ENCODE measurements at regions of chr2 and their contacts with region 1.

Region 1: DNA sequence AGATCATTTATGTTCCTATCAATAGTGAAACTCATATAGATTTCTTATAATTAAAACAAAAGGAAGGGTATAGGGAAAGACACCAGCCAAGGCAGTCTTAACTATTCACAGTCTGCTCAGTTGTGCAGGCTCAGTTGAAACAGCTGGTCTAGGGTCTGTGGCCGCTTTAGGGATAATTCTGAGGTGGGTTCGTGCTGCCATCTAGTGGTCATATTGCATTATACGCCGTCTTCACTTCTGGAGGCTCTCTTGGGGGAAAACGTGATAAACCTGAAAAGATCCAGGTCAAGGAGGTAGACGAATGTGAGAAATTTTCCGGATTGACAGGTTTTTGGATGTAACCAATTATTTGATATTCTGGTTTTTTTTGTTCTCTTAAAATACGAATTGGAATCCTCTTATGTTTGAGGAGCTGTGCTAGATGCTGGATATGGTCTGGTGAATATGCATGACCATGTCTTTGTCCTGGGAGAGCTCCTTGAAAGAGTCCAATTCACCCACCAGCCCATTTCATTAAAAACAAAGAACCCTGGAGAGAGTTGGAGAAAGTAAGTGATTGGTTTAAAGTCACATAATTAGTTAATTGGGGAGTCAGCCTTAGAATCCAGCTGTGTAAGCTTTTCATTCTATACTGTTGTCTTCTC is 492.4 kb downstream of the PLCL1 start:
- DNase-seq: no peak
- ATAC-seq: peak; percentile 79

Region 2: GRCh38 chr2:197405582-197405981 is 891.2 kb before region 1 on chr2:
- intact Hi-C with region 1: no loop called
- DNase-seq: no peak
- ATAC-seq: no peak

Region 3: DNA sequence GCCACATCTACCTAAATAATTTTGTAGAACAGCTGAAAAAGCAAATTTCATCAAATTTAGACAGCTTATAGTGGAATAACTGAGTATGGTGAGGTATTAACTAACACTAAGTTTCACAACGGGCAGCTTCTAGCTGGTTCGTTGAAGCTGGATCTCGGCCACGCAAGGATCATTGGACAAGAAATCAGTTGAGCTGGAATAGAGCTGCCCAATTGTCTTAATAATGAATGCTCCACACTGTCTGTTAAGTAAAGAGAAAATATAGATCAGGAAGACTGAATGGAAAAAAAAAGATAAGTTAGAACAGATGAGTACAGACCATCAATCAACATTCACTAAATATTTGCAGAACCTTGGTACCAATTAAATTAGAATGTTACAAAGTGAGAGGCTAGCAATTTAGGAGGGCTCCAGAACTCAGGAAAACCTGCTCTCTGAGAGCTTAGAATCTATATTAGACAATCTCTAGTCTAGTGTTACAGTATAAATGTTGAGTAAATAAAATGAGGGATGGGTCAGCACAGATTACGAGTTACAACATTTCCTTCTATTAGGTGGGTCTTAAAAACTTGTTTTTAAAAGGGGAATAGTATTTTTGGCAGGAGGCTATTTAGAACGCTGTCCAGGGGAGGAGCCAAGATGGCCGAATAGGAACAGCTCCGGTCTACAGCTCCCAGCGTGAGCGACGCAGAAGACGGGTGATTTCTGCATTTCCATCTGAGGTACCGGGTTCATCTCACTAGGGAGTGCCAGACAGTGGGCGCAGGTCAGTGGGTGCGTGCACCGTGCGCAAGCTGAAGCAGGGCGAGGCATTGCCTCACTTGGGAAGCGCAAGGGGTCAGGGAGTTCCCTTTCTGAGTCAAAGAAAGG is 568.2 kb before region 1 on chr2:
- intact Hi-C with region 1: loop called (anchors 5 kb)
- DNase-seq: no peak
- ATAC-seq: no peak

Region 4: DNA sequence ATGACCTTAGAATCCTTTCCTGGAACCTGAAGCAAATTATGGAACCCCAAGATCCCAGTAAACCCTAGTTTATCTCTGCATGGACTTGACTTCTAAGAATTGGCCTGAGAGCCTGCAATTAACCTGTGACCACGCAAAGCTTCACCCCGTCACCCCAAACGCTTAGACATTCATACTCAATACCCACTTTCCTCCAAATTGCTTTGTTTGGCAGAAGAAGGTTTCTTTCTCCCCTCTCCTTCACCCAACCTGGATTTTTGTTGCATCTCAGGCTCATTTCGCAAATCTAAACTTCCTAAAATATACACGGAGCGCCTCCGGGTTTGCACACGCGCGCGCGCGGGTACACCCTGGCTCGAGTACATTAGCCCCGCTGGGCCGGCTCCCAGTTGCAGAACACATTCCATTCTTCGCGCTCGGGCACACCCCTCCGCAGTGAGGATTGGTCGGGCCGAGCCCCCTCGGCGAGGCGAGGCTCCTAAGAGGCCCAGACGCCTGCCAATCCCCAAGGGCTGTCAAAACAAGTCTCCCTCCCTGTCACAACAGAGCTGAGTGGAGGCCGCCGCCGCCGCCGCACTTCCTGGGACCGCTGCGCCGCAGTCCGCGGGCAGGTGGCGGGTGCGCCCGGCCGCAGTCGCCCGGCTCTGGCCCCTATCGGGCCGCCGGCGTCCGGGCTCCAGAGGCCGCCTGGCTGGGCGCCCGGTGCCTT is 492.6 kb before region 1 on chr2 and contains the start of gene PLCL1:
- intact Hi-C with region 1: loop called (anchors 5 kb)
- DNase-seq: peak; percentile 96
- ATAC-seq: peak; percentile 92
- total RNA-seq, gene PLCL1: 100 TPM

Region 5: DNA sequence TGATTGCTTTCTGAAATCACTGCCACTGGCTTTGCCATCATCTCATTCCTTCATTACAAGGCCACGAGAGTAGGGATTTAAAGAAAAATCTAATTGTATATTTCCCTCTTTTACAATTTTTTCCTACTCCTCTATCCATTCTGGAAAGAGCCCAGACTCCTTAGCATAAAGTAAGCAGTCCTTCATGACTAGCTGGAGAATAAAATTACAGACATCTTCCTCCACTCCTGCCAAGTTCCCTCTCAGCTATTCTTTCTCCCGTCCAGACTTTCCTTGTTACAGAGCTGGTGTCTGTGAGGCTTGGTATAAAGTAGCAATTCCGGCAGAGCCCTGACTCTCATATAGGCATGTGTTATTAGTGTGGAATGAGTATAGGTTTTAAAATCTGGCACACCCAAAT is 314.4 kb after region 1 on chr2:
- intact Hi-C with region 1: no loop called
- DNase-seq: no peak
- ATAC-seq: no peak

Measured in left ventricle myocardium superior (tissue), 1 donor.